Activated naive CD4-positive, alpha-beta T cell treated with anti-CD3 and anti-CD28 coated beads, Interleukin-2, amount 10 ng/mL, durations not matched to agents 7 days and 5 days (primary cell): ENCODE measurements at regions of chr3 and their contacts with region 1.

Region 1: DNA sequence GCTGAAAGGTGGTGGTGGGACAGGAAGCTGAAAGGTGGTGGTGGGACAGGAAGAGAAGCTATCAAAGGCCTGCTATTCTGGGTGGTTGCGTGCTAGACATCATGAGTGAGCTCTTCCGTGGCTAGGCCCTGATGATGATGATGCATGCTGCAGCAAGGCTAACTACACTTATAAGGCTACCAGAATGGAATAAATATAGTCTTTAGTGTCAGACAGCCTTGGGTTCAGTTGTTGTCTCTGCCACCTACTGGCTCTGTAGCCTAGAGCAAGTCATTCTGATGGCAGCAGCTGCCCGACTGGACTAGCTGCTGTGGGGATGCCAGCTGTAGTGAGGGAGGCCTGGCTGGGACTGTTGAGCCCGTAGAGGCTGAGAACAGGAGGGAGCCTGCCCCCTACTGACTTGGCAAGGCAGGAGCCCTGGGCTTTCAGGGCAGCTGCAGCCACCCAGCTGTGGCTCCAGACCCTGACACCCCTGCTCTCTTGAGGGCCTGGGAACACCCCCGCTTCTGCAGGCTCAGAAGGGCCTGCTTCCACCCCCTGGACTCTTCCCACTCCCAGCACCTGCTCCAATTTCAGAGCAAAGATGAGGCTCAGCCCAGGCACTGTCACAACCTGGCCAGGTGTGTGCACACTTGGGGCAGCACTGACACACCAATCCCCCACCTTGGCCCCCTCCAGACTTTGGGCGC is 21.4 kb upstream of the ZBED2 start:
- DNase-seq: peak; percentile 73
- H3K4me3 Mint-ChIP-seq: peak overlapping the region; percentile 23
- H3K27ac Mint-ChIP-seq: peak overlapping the region; percentile 89
- H3K4me1 Mint-ChIP-seq: peaks cover 70% of the 10 kb centered on the region
- H3K27me3 Mint-ChIP-seq: no peaks in the 10 kb centered on the region

Region 2: GRCh38 chr3:111539351-111540331 is 76.9 kb before region 1 on chr3:
- CTCF ChIA-PET with region 1: interaction called, 54 read pairs
- DNase-seq: peak; percentile 79
- H3K4me3 Mint-ChIP-seq: peak overlapping the region; percentile 64
- H3K27ac Mint-ChIP-seq: peak overlapping the region; percentile 90
- H3K4me1 Mint-ChIP-seq: peaks cover 54% of the 10 kb centered on the region
- H3K27me3 Mint-ChIP-seq: no peaks in the 10 kb centered on the region

Region 3: DNA sequence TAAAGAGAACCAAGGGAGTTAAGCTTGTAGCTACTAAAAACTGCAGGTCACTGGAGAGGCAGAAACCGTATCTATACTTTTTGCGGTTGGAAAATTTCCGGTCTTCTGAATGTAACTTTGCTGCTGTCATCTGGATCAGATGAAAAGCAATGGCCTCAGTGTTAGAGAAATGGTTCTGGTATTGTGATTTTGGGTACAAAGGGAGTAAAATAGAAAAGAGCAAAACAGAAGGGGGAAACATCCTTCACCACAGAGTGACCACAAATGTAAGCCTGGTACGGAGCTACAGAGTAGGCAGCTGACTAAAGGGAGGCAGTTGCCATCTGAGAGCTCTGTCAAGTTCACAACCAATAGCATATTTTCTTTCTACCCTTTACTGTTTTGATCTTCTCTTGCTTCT is 68.9 kb before region 1 on chr3:
- CTCF ChIA-PET with region 1: interaction called, 54 read pairs
- DNase-seq: peak; percentile 77
- H3K4me3 Mint-ChIP-seq: no peak overlapping the region
- H3K27ac Mint-ChIP-seq: no peak overlapping the region
- H3K4me1 Mint-ChIP-seq: peaks cover 35% of the 10 kb centered on the region
- H3K27me3 Mint-ChIP-seq: no peaks in the 10 kb centered on the region

Region 4: DNA sequence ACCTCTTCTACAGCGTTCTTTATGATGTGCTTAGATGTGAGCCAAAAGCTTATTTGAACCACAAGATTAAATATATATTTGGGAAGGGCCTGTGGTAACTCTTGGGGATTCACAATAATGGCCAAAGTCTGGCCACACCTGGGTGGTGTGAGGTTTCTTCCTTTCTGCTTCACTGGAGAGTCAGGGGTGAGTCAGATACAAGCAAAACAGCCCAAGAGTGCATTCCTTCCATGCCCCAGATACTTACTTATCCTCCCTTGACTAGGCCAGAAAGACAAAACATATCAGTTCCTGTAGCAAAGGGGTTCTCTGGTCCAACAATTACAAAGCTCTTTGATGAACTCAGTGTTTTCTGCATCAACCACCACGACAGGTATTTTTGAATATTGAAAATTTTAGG is 22.4 kb before region 1 on chr3:
- CTCF ChIA-PET with region 1: interaction called, 34 read pairs
- DNase-seq: no peak
- H3K4me3 Mint-ChIP-seq: peak overlapping the region; percentile 1
- H3K27ac Mint-ChIP-seq: peak overlapping the region; percentile 56
- H3K4me1 Mint-ChIP-seq: peaks cover 71% of the 10 kb centered on the region
- H3K27me3 Mint-ChIP-seq: no peaks in the 10 kb centered on the region

Region 5: DNA sequence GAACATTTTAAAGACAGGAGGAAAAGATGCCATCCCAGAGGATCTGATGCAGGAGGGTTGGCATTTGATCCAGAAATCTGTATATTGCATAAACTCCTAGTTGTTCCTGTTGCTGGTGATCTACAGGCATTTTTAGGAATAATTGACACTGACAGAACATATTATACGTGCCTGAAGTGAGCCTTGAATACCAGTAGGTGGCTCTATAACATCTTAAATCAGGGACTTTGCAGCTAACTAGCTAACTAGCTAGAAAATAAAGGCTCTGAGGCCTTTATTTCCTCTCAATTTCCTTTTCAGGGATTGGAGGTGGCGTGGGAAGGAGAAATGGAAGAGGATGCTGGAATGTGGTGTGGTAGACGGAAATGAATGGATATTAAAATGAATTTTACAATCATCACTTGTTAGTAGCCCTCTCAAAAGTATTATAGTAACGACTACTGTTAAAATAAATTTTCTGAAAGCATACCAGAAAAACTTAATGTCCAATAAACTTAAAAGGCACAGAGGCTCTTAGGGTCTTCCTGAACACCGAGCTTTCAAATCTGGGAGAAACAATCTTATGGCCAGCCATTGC is 52.4 kb after region 1 on chr3:
- CTCF ChIA-PET with region 1: interaction called, 17 read pairs
- DNase-seq: no peak
- H3K4me3 Mint-ChIP-seq: no peak overlapping the region
- H3K27ac Mint-ChIP-seq: peak overlapping the region; percentile 83
- H3K4me1 Mint-ChIP-seq: peaks cover 85% of the 10 kb centered on the region
- H3K27me3 Mint-ChIP-seq: no peaks in the 10 kb centered on the region